H1 (cell line): ENCODE measurements at regions of chr6 and their contacts with region 1.

Region 1: DNA sequence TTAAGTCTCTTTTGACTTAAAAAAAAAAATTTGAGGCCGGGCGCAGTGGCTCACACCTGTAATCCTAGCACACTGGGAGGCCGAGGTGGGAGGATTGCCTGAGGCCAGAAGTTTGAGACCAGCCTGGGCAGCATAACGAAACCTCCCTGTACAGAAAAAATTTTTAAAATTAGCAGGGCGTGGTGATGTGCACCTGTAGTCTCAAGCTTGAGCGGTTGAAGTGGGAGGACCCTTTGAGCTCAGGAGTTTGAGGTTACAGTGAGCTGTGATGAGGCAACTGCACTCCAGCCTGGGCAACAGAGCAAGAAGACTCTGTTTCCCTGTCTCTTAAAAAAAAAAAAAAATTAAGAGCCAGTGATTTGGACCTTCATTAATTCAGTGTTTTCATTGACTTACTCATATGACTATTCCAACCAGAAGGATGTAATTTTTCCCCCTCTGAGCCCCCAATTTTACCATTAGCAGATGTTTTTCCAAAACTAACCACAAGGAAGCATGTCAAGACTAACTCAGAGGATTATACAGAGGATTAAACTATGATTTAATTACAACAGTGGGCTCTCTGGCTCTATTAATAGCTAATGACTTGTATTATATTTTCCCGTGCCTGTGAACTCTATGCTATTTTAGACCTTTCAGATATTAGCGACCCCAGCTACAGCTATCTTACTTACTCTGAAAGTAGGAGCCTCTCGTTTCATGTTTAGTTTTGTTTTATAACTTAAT is 75.1 kb downstream of the ARID1B start:
- DNase-seq: no peak
- H3K4me3 ChIP-seq: peak overlapping the region in 1 of 4 experiments; percentile 47; a peak in 2 of 8 replicates
- H3K27ac ChIP-seq: peak overlapping the region; percentile 17; the same call in 1 of the 2 replicates
- H3K4me1 ChIP-seq: peaks cover 6 to 42% (median 28%) of the 10 kb centered on the region in 4 experiments
- H3K27me3 ChIP-seq: no peaks in the 10 kb centered on the region
- CTCF ChIP-seq: no peak
- EP300 ChIP-seq: no peak
- POLR2A ChIP-seq: no peak
- RAD21 ChIP-seq: no peak

Region 2: GRCh38 chr6:156820089-156820798 is 32.1 kb before region 1 on chr6:
- CTCF ChIA-PET with region 1: no interaction called
- POLR2A ChIA-PET with region 1: no interaction called
- DNase-seq: no peak
- H3K4me3 ChIP-seq: no peak overlapping the region
- H3K27ac ChIP-seq: no peak overlapping the region
- H3K4me1 ChIP-seq: peaks cover 4 to 8% (median 6%) of the 10 kb centered on the region in 4 experiments; a peak in 6 of 7 replicates
- H3K27me3 ChIP-seq: no peaks in the 10 kb centered on the region; a peak in 1 of 7 replicates
- CTCF ChIP-seq: no peak
- EP300 ChIP-seq: no peak
- POLR2A ChIP-seq: no peak
- RAD21 ChIP-seq: no peak

Region 3: GRCh38 chr6:156866220-156867015 is 14.1 kb after region 1 on chr6:
- CTCF ChIA-PET with region 1: interaction called, 12 read pairs
- POLR2A ChIA-PET with region 1: interaction called, 5 read pairs
- DNase-seq: no peak
- H3K4me3 ChIP-seq: no peak overlapping the region
- H3K27ac ChIP-seq: no peak overlapping the region
- H3K4me1 ChIP-seq: peaks cover 0 to 23% (median 16%) of the 10 kb centered on the region in 4 experiments
- H3K27me3 ChIP-seq: no peaks in the 10 kb centered on the region
- CTCF ChIP-seq: peak in 1 of 3 experiments; percentile 15; a peak in 1 of 4 replicates
- EP300 ChIP-seq: no peak
- POLR2A ChIP-seq: no peak
- RAD21 ChIP-seq: peak; percentile 25 to 40; a peak in 2 of 4 replicates

Region 4: DNA sequence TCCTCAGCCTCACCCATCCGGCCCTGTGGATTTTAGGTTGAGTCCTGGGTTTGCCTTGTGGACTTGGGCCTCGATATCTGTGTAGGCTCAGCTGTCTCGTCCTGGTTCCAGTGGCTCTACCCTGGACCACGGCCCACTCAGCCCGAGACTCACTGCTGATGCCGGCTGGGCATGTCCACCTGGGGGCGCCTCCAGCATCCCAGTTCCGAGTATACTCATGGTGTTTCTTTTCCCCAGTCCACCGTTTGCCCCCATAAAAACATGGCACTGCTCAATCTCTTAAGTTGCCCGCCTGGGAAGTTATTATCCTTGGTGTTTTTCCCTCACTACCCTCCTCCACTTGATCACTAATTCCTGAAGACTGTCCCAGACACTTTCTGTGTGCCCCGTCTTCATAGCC is 24.0 kb after region 1 on chr6:
- CTCF ChIA-PET with region 1: interaction called, 13 read pairs
- POLR2A ChIA-PET with region 1: no interaction called
- DNase-seq: peak in 1 of 2 experiments; percentile 81
- H3K4me3 ChIP-seq: no peak overlapping the region
- H3K27ac ChIP-seq: no peak overlapping the region
- H3K4me1 ChIP-seq: peaks cover 2 to 8% (median 5%) of the 10 kb centered on the region in 4 experiments; a peak in 5 of 7 replicates
- H3K27me3 ChIP-seq: no peaks in the 10 kb centered on the region
- CTCF ChIP-seq: peak; percentile 76 to 84 (median 77)
- EP300 ChIP-seq: no peak
- POLR2A ChIP-seq: no peak
- RAD21 ChIP-seq: peak; percentile 69 to 80